ENCODE measurements at regions of chr6 and their contacts with region 1.

Region 1: DNA sequence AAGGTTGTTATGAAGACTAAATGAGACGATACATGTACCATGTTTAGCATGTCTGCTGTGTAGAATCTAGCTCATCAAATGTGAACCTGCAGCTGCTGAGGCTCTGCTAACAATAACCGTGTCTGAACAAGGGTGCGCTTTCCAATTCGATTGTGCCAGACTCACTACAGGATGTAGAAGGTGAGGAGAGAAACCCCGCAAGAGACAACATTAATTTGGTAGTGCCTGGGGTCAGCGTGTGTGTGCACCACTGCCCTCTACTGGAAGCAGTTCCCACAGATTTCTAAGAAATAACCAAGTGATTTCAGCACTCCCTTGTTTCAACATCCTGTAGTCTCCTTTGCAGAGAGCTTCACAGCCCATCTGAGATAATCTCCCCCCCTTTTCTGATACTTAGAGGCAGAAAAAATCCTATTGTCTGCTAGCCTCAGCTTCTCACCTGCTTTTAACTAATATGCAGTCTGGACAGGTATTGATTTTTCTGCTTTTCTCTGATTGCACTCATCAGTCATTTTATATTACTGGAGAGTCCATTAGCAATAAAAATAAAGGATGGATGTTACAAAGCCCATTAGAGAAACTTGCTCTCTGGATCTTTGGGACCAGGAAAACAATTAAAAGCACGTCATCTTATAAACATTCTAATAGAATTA is 96.7 kb upstream of the BACH2 start:
- DNase-seq: peak; percentile 46
- CTCF ChIP-seq: peak; percentile 61

Region 2: DNA sequence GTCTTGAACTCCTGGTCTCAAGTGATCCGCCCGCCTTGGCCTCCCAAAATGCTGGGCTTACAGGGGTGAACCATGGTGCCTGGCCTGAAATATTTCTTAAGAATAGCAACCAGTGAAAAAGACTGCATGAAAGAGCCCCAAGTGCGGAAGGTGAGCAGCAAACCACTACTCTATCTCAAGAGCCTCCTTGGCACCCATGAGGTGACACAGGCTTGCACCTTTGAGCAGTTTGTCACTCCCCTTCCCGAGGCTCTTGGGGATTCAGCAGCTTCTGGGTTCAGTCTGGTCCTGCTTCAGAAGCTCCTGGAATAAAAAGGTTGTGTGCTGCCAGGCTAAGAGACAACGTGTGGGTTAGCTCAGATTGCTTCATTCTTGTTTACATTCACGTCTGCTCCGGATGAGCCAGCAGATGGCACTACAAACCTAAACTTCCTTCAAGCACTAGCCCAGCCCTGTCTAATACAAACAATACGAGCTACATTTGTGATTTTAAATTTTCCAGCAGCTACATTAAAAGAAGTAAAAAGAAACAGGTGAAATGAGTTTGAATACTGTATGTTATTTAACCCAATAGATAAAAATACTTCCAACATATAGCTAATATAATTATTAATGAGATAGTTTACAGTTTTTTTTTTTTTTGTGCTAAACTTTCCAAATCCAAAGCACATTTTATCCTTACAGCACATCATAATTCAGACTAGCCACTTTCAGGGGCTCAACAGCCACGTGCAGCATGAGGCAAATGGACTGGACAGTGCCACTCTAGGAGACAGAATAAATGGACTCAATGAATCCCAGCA is 452.9 kb before region 1 on chr6:
- CTCF ChIA-PET with region 1: interaction called, 30 read pairs
- POLR2A ChIA-PET with region 1: no interaction called
- DNase-seq: peak; percentile 75
- CTCF ChIP-seq: peak; percentile 65

Region 3: DNA sequence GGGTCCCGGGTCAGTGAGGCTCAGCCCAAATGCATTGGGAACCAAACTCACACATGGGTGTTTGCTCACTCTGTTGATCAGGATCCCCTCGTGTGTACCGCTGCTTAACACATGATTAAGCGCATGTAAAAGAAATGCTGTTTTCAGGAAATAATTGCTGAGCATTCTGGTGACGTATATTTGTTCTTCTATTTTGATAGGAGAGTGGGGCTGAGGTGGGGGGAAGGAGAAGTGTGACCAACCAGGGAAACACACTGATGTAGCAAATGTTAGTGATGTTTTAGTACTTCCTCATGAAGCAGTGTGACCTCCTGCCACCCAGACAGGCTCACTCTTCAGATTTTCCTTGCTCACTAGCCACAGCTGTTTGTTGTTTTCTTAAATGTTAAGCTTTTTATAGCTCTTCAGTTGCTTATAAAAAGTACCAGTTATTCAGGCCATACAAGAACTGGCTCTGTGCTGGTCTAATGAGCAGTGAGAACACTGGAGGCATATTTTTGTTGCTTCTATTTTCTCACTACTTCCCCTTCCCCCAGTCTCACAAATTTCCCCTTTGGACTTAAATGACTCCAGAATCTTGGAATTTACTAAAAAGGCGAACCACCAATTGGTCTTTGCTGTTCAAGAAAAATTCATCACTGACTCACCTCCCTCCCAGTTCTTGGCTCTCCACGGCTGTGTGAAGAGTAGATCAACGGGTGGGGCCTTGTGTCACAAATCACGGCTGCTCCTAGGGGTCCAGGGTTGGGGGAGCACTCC is 17.5 kb before region 1 on chr6:
- CTCF ChIA-PET with region 1: interaction called, 35 read pairs
- POLR2A ChIA-PET with region 1: no interaction called
- DNase-seq: no peak
- CTCF ChIP-seq: no peak

Region 4: GRCh38 chr6:90383196-90383822 is 10.0 kb before region 1 on chr6:
- CTCF ChIA-PET with region 1: interaction called, 35 read pairs
- POLR2A ChIA-PET with region 1: no interaction called
- DNase-seq: no peak
- CTCF ChIP-seq: no peak

Region 5: GRCh38 chr6:90403489-90404381 is 10.4 kb after region 1 on chr6:
- CTCF ChIA-PET with region 1: interaction called, 19 read pairs
- POLR2A ChIA-PET with region 1: no interaction called
- DNase-seq: no peak
- CTCF ChIP-seq: no peak

Region 6: DNA sequence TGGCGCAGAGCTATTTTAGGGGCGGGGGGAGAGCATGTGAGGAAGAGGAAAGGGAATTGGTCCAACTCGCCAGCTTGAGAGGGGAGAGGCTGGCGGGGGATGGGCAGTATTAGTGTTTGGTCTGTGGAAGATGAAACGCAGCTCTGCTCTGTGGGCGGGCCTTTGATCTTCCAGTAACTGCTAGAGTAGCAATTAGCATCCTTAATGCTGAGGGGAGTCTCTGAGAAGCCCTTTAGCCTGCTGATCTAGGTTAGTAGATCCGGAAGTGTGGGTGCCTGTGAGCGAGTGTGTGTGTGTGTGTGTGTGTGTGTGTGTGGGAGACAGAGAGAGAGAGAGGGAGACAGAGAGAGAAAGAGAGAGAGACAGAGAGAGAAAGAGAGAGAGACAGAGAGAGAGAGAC is 20.5 kb after region 1 on chr6:
- CTCF ChIA-PET with region 1: interaction called, 28 read pairs
- POLR2A ChIA-PET with region 1: interaction called, 3 read pairs
- DNase-seq: peak; percentile 53
- CTCF ChIP-seq: no peak

Measured in GM10248 (cell line).